GM18951 (cell line): ENCODE measurements at regions of chr11 and their contacts with region 1.

Region 1: GRCh38 chr11:114571712-114572111 is 12.0 kb upstream of the NXPE1 start:
- POLR2A ChIP-seq: no peak

Region 2: DNA sequence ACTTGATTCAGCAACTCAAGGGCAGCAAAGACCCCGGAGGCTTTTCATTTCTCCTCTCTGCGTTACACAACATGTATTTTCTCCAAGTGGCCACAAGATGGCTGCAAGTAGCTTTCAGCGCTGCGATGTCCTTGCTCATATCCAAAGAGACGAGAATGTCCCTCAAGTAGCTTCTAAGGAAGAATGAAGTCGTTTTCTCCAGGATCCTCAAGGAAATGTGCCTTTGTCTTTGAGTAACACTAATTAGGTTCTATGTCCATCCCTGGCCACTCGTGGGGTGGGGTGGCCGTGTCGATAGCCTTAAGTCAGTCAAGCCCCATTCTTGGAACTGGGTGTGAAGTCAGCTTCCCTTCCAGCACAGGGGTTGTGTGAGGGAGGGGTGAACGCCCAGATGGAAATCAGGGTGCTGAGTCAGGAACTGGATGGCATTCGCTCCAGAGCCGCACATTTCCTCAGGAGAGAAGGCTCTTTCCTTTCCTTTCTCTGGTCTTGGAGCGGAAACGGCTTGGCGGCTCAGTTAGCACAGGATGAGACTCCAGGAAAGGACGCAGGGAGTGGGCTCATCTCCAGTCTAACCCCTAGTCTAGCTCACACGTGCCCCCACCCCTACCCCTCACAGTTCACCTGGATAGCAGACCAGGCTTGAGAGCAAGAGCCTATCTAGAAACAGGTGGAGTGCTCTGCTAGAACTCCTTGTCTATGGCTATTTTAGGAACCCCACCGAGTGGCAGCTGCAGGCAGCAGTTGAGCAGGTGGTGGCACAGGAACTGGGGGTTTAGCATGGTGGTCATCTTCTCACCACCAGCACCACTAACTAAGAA is 231.2 kb before region 1 on chr11:
- in situ Hi-C with region 1: loop called (anchors 10 kb)
- POLR2A ChIP-seq: no peak

Region 3: GRCh38 chr11:115008799-115009198 is 437.1 kb after region 1 on chr11:
- in situ Hi-C with region 1: no loop called
- POLR2A ChIP-seq: no peak

Region 4: DNA sequence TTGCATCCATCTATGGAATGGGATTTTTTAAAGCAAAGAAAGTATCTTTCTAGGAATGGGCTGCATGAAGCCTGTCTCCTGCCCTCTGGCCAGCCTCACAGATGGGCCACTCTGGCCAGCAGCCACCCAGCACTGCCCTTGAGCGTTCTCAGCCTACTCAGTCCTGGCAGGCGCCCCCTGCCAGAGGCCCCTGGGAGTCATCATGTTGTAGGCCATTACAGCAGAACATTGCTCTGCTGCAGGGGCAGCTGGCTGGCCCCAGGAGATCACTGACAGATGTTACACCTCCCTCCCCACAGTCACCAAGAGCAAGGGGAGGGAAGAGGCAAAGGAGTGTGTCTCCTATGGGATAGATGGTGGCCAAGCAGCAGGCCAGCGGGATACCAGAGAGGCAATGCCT is 470.3 kb after region 1 on chr11:
- in situ Hi-C with region 1: no loop called
- POLR2A ChIP-seq: no peak